A673 (cell line): ENCODE measurements at regions of chrX and their contacts with region 1.

Region 1: DNA sequence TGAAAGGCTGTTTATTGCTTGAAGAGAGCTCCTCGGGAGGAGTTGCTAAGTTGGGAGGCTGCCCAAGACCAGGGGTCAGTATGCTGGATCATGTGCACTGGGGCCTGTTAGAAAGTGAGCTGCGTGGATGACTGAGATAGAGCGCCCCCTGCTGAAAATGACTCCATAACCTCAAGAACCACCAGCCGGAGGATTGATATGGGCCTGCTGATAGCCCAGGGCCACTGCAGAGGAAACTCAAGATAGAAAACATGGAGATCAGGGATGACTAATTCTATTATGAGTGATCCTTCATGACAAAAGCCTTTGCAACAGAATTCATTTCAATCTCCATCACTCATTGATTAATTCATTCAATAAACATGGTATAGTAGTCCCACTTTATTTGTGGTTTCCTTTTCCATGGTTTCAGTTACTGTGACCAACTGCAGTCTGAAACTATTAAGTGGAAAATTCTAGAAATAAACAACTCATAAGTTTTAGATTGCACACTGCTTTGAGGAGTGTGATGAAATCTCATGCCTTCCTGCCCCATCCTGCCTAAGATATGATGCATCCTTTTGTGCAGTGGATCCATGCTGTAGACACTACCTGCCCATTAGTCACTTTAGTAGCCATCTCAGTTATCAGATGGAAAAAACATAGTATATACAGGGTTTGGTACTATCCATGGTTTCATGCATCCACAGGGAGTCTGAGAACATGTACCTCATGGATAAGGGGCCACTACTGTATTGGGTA is 126.7 kb upstream of the MBNL3 start:
- DNase-seq: peak; percentile 56
- H3K4me3 ChIP-seq: no peak overlapping the region
- H3K27ac ChIP-seq: no peak overlapping the region
- H3K4me1 ChIP-seq: no peaks in the 10 kb centered on the region
- H3K27me3 ChIP-seq: no peaks in the 10 kb centered on the region
- CTCF ChIP-seq: peak; percentile 67

Region 2: DNA sequence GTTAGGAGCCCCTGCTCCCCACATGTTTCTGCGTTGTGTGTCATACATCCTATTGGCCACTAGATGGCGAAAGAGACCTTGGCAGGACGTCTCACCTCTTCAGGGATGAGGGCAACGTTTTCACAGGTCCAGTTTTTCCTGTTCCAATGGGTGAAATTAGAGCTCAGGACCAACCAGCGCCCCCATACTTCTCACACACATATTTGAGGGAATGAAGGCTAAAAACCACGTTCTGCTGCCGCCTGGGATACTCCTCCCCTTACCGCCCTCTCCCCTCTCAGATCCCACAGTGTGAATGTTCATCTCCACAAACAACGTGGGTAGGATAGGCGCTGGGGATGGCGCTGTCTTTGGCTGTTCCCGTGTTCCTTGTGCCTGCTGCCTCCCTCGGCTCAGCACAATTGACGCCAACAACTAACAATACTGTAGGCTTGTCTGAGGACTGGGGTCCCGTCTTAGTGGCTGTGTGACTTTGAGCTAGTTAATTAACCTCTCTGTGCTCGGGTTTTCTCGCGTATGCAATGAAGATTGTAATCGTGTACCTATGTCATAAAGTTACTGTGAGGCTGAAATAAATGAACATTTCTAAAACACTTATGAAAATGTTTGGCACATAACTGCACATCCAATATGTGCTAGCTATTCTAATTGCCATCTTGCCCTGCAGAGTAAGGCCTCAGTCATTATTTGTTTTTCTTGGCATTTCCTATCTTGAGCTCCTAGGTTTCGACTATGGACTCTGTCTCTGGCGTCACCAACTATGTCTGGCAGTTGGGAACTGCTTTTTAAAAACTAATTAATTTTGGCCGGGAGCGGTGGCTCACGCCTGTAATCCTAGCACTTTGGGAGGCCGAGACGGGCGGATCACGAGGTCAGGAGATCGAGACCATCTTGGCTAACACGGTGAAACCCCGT is 773.8 kb before region 1 on chrX:
- CTCF ChIA-PET with region 1: interaction called, 3 read pairs
- POLR2A ChIA-PET with region 1: no interaction called
- intact Hi-C with region 1: loop called (anchors 5 kb)
- DNase-seq: peak; percentile 69
- H3K4me3 ChIP-seq: no peak overlapping the region
- H3K27ac ChIP-seq: no peak overlapping the region
- H3K4me1 ChIP-seq: no peaks in the 10 kb centered on the region
- H3K27me3 ChIP-seq: peaks cover 19% of the 10 kb centered on the region
- CTCF ChIP-seq: peak; percentile 82

Region 3: GRCh38 chrX:132092439-132093065 is 523.0 kb before region 1 on chrX:
- CTCF ChIA-PET with region 1: no interaction called
- POLR2A ChIA-PET with region 1: no interaction called
- intact Hi-C with region 1: loop called (anchors 2 kb)
- DNase-seq: peak; percentile 73
- H3K4me3 ChIP-seq: no peak overlapping the region
- H3K27ac ChIP-seq: no peak overlapping the region
- H3K4me1 ChIP-seq: no peaks in the 10 kb centered on the region
- H3K27me3 ChIP-seq: peaks cover 29% of the 10 kb centered on the region
- CTCF ChIP-seq: peak; percentile 74

Region 4: DNA sequence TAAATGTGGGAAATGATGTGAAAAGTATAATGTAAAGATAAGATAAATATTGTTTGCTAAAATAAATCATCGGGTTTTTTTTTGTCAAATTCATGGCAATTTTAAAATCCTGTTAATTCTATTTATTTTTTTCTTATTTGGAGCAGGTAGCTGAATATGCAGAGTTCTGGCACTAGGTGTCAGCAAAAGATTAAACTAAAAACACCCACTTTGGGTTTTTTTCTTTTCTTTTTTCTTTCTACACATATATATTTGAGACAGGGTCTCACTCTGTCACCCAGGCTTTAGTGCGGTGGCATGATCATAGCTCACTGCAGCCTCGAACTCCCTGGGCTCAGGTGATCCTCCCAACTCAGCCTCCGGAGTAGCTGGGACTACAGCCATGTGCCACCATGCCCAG is 389.4 kb before region 1 on chrX:
- CTCF ChIA-PET with region 1: interaction called, 9 read pairs
- POLR2A ChIA-PET with region 1: no interaction called
- intact Hi-C with region 1: loop called (anchors 2 kb)
- DNase-seq: peak; percentile 23
- H3K4me3 ChIP-seq: no peak overlapping the region
- H3K27ac ChIP-seq: no peak overlapping the region
- H3K4me1 ChIP-seq: no peaks in the 10 kb centered on the region
- H3K27me3 ChIP-seq: peaks cover 5% of the 10 kb centered on the region
- CTCF ChIP-seq: peak; percentile 59

Region 5: GRCh38 chrX:132292793-132293192 is 322.8 kb before region 1 on chrX:
- CTCF ChIA-PET with region 1: interaction called, 5 read pairs
- POLR2A ChIA-PET with region 1: no interaction called
- intact Hi-C with region 1: loop called (anchors 2 kb)
- DNase-seq: peak; percentile 63
- H3K4me3 ChIP-seq: no peak overlapping the region
- H3K27ac ChIP-seq: no peak overlapping the region
- H3K4me1 ChIP-seq: no peaks in the 10 kb centered on the region
- H3K27me3 ChIP-seq: no peaks in the 10 kb centered on the region
- CTCF ChIP-seq: peak; percentile 73

Region 6: GRCh38 chrX:132631579-132632232 is 16.1 kb after region 1 on chrX:
- CTCF ChIA-PET with region 1: no interaction called
- POLR2A ChIA-PET with region 1: no interaction called
- intact Hi-C with region 1: no loop called
- DNase-seq: peak; percentile 46
- H3K4me3 ChIP-seq: no peak overlapping the region
- H3K27ac ChIP-seq: no peak overlapping the region
- H3K4me1 ChIP-seq: no peaks in the 10 kb centered on the region
- H3K27me3 ChIP-seq: peaks cover 6% of the 10 kb centered on the region
- CTCF ChIP-seq: peak; percentile 60

Region 7: GRCh38 chrX:132704769-132705168 is 89.2 kb after region 1 on chrX:
- CTCF ChIA-PET with region 1: no interaction called
- POLR2A ChIA-PET with region 1: no interaction called
- intact Hi-C with region 1: no loop called
- DNase-seq: no peak
- H3K4me3 ChIP-seq: no peak overlapping the region
- H3K27ac ChIP-seq: no peak overlapping the region
- H3K4me1 ChIP-seq: no peaks in the 10 kb centered on the region
- H3K27me3 ChIP-seq: peaks cover 9% of the 10 kb centered on the region
- CTCF ChIP-seq: no peak